ENCODE measurements at regions of chr3 and their contacts with region 1.

Region 1: GRCh38 chr3:120095226-120095978 is 1.2 kb upstream of the GSK3B start:
- DNase-seq: peak; percentile 68 to 91 (median 81)
- ATAC-seq: peak; percentile 27
- H3K4me3 ChIP-seq: peak overlapping the region; percentile 84 to 89
- H3K4me3 Mint-ChIP-seq: no peak overlapping the region
- H3K27ac ChIP-seq: peak overlapping the region; percentile 98
- H3K27ac Mint-ChIP-seq: no peak overlapping the region
- H3K4me1 ChIP-seq: peaks cover 32% of the 10 kb centered on the region
- H3K4me1 Mint-ChIP-seq: peaks cover 26% of the 10 kb centered on the region
- H3K27me3 ChIP-seq: no peaks in the 10 kb centered on the region
- H3K27me3 Mint-ChIP-seq: no peaks in the 10 kb centered on the region
- CTCF ChIP-seq: no peak

Region 2: DNA sequence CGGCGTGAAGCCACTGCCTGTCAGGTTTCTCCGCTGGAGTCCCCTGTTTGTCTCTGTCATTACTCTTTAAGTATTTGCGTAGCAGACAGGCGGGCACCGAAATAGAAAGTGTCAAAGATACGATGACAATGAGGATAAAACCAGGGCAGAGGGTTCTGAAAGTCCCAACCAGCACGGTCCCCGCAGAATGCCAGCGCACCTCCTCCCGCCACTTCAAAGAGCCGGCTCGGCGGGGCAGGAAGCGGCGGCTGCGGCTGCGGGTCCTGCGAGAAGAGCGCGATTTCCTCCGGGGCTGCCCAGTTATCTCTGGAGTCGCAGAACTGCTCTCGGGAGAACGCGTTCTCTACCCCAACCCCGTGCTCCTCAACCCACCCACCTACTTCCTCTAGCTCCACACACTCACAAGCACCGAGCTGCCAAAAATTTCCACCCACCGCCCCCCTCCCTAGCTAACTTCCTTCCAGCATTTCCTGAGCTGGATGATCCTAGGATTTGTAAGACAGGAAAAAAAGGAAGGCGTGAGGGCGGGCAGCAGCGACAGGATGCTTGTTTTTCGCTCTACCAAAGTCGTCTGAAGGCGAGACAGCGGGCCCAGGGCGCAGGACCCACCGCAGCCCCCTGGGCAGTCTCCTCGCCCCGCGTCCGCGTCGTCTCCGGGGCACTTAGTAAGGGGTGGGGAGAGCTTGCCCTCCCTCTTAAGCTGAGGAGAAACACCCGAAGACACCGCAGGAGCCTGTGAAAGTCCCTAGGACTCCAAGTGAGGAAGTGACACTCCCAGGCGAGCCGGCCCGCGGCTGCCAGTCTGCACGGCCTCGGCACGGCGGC is 801.3 kb before region 1 on chr3 and contains the start of gene ARHGAP31:
- CTCF ChIA-PET with region 1: no interaction called
- POLR2A ChIA-PET with region 1: interaction called, 3 read pairs
- intact Hi-C with region 1: loop called in 1 of 2 experiments (anchors 1 kb)
- DNase-seq: peak; percentile 71 to 96 (median 86)
- ATAC-seq: peak; percentile 64
- H3K4me3 ChIP-seq: peak within 1 kb of the TSS; percentile 61 to 82
- H3K4me3 Mint-ChIP-seq: peak within 1 kb of the TSS; percentile 95
- H3K27ac ChIP-seq: peak within 1 kb of the TSS; percentile 58 to 84
- H3K27ac Mint-ChIP-seq: peak within 1 kb of the TSS; percentile 98
- H3K4me1 ChIP-seq: peaks cover 30% of the 10 kb centered on the region
- H3K4me1 Mint-ChIP-seq: peaks cover 55% of the 10 kb centered on the region
- H3K27me3 ChIP-seq: no peaks in the 10 kb centered on the region
- H3K27me3 Mint-ChIP-seq: no peaks in the 10 kb centered on the region
- CTCF ChIP-seq: no peak
- total RNA-seq, gene ARHGAP31: 1.00 to 1.1 TPM

Region 3: DNA sequence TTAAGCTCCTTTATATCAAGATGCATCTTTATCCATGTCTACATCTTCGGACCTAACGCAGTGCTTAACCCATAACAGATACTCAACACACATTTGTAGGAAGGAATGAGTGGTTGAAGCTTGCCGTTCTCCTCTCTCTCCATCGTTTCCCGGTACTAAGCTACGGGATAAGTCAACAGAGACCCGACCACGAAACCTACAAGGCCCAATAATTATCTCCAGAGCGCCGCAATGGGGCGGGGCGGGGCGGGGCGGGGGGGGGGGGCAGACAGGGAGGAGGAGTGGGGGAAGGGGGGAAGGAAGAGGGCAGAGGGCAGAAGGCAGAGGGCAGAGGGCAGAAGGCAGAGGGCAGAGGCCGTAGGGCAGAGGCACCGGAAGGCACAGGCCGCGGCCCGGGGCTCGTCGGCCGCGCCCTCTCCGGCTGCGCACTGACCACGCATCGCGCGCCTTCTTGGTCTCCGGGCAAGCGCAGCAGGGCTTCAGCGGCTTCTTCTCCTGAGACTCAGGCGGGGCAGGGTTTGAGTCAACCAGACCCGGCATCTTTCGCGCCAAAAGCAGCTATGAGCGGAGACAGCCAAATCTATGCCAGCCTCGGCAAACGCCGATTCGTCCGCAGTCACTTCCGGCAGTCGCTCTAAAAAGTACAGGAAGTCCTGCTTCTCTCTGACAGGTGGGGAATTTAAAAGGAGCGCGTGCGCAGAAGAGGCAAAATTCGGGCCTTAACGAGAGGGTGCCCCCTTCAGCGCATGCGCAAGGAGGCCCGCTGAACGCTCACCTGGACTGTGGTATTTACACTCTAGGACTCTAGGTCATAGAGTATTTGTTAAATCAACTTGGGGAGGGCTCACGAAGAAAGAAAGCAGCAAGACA is 418.4 kb before region 1 on chr3 and contains the start of gene COX17:
- CTCF ChIA-PET with region 1: no interaction called
- POLR2A ChIA-PET with region 1: interaction called, 4 read pairs
- intact Hi-C with region 1: loop called (anchors 1 to 5 kb)
- DNase-seq: peak; percentile 92 to 99 (median 96)
- ATAC-seq: peak; percentile 86
- H3K4me3 ChIP-seq: peak within 1 kb of the TSS; percentile 26 to 79
- H3K4me3 Mint-ChIP-seq: peak within 1 kb of the TSS; percentile 87
- H3K27ac ChIP-seq: peak within 1 kb of the TSS; percentile 49 to 95
- H3K27ac Mint-ChIP-seq: peak within 1 kb of the TSS; percentile 96
- H3K4me1 ChIP-seq: peaks cover 20% of the 10 kb centered on the region
- H3K4me1 Mint-ChIP-seq: peaks cover 35% of the 10 kb centered on the region
- H3K27me3 ChIP-seq: no peaks in the 10 kb centered on the region
- H3K27me3 Mint-ChIP-seq: no peaks in the 10 kb centered on the region
- CTCF ChIP-seq: no peak
- total RNA-seq, gene COX17: 22.4 to 23.2 TPM

Region 4: GRCh38 chr3:119937229-119937628 is 158.2 kb before region 1 on chr3:
- CTCF ChIA-PET with region 1: no interaction called
- POLR2A ChIA-PET with region 1: no interaction called
- intact Hi-C with region 1: loop called in 1 of 2 experiments (anchors 10 kb)
- DNase-seq: peak in 7 of 9 experiments; percentile 0 to 68 (median 29)
- ATAC-seq: peak; percentile 92
- H3K4me3 ChIP-seq: no peak overlapping the region
- H3K4me3 Mint-ChIP-seq: peak overlapping the region; percentile 67
- H3K27ac ChIP-seq: peak overlapping the region; percentile 0 to 4
- H3K27ac Mint-ChIP-seq: peak overlapping the region; percentile 79
- H3K4me1 ChIP-seq: peaks cover 8% of the 10 kb centered on the region
- H3K4me1 Mint-ChIP-seq: peaks cover 55% of the 10 kb centered on the region
- H3K27me3 ChIP-seq: no peaks in the 10 kb centered on the region
- H3K27me3 Mint-ChIP-seq: no peaks in the 10 kb centered on the region
- CTCF ChIP-seq: no peak

Region 5: GRCh38 chr3:120324192-120324591 is 228.8 kb after region 1 on chr3:
- CTCF ChIA-PET with region 1: no interaction called
- POLR2A ChIA-PET with region 1: no interaction called
- intact Hi-C with region 1: no loop called
- DNase-seq: no peak
- ATAC-seq: no peak
- H3K4me3 ChIP-seq: no peak overlapping the region
- H3K4me3 Mint-ChIP-seq: no peak overlapping the region
- H3K27ac ChIP-seq: no peak overlapping the region
- H3K27ac Mint-ChIP-seq: no peak overlapping the region
- H3K4me1 ChIP-seq: no peaks in the 10 kb centered on the region
- H3K4me1 Mint-ChIP-seq: no peaks in the 10 kb centered on the region
- H3K27me3 ChIP-seq: no peaks in the 10 kb centered on the region
- H3K27me3 Mint-ChIP-seq: no peaks in the 10 kb centered on the region
- CTCF ChIP-seq: no peak

Region 6: DNA sequence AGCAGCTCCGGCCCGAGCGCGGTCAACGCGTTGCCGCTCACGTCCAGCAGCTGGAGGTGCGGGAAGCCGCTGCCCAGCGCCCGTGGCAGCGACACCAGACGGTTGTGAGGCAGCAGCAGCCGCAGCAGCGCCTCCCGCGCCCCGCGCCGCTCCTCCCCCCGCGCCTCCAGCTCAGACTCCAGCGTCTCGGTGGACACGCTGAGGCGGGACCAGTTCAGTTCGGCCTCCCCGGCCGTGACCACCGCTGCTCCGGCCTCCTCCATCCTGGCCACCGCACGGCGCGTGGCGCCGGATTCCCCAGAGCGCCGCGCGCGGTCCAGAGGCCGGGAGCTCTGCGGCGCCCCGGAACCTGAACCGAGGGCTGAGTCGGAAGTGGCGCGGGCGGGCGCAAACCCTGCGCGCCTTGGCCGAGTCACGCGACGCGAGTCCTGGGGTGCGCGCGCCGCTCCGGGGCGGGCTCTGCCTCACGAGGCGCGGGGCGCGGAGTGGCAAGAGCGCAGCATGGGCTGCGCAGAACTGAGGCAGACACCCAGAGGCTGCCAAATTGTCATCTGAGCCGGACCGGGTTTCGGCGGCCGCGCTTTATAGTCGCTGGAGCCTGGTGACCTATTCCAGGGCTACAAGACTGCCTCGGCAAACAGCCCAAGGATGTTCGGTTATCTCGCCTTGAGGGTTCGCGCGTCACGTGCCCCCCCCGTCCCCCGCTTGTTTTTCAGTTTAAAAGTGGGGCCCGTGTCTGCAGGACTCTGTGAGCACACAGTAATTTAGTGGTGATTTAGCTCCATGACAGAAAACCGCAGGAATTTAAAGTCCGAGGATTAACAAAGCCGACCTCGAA is 253.8 kb after region 1 on chr3 and contains the start of gene LRRC58:
- CTCF ChIA-PET with region 1: no interaction called
- POLR2A ChIA-PET with region 1: interaction called, 29 read pairs
- intact Hi-C with region 1: loop called (anchors 1 to 2 kb)
- DNase-seq: peak; percentile 77 to 95 (median 88)
- ATAC-seq: peak; percentile 90
- H3K4me3 ChIP-seq: peak within 1 kb of the TSS; percentile 71 to 83
- H3K4me3 Mint-ChIP-seq: peak within 1 kb of the TSS; percentile 89
- H3K27ac ChIP-seq: peak within 1 kb of the TSS; percentile 71 to 75
- H3K27ac Mint-ChIP-seq: peak within 1 kb of the TSS; percentile 94
- H3K4me1 ChIP-seq: peaks cover 44% of the 10 kb centered on the region
- H3K4me1 Mint-ChIP-seq: peaks cover 46% of the 10 kb centered on the region
- H3K27me3 ChIP-seq: no peaks in the 10 kb centered on the region
- H3K27me3 Mint-ChIP-seq: peaks cover 6% of the 10 kb centered on the region
- CTCF ChIP-seq: peak; percentile 35
- total RNA-seq, gene LRRC58: 16.1 to 17.0 TPM

Region 7: GRCh38 chr3:121654493-121655385 is 1559.3 kb after region 1 on chr3:
- CTCF ChIA-PET with region 1: no interaction called
- POLR2A ChIA-PET with region 1: no interaction called
- intact Hi-C with region 1: loop called in 1 of 2 experiments (anchors 10 kb)
- DNase-seq: peak in 2 of 9 experiments; percentile 20 to 51
- ATAC-seq: peak; percentile 81
- H3K4me3 ChIP-seq: peak overlapping the region in 1 of 2 experiments; percentile 7
- H3K4me3 Mint-ChIP-seq: peak overlapping the region; percentile 61
- H3K27ac ChIP-seq: peak overlapping the region; percentile 8 to 70
- H3K27ac Mint-ChIP-seq: peak overlapping the region; percentile 91
- H3K4me1 ChIP-seq: peaks cover 76% of the 10 kb centered on the region
- H3K4me1 Mint-ChIP-seq: peaks cover 86% of the 10 kb centered on the region
- H3K27me3 ChIP-seq: no peaks in the 10 kb centered on the region
- H3K27me3 Mint-ChIP-seq: no peaks in the 10 kb centered on the region
- CTCF ChIP-seq: no peak